Dendritic cell treated with granulocyte-macrophage colony-stimulating factor and Interleukin-4, amounts not matched to agents 40 ng/mL and 50 ng/mL, for 4 days (primary cell): ENCODE measurements at regions of chr1 and their contacts with region 1.

Region 1: GRCh38 chr1:47231301-47232186 is 481 bp downstream of the TAL1 start:
- H3K4me3 Mint-ChIP-seq: peak overlapping the region; percentile 75
- H3K27ac Mint-ChIP-seq: peak overlapping the region; percentile 87
- H3K4me1 Mint-ChIP-seq: peaks cover 52% of the 10 kb centered on the region
- H3K27me3 Mint-ChIP-seq: peaks cover 97% of the 10 kb centered on the region

Region 2: GRCh38 chr1:47067097-47067594 is 164.4 kb before region 1 on chr1 and contains the start of gene CYP4Z1:
- intact Hi-C with region 1: no loop called
- H3K4me3 Mint-ChIP-seq: no peak within 1 kb of the TSS
- H3K27ac Mint-ChIP-seq: no peak within 1 kb of the TSS
- H3K4me1 Mint-ChIP-seq: no peaks in the 10 kb centered on the region
- H3K27me3 Mint-ChIP-seq: peaks cover 16% of the 10 kb centered on the region

Region 3: GRCh38 chr1:47113178-47113577 is 118.4 kb before region 1 on chr1:
- intact Hi-C with region 1: no loop called
- H3K4me3 Mint-ChIP-seq: no peak overlapping the region
- H3K27ac Mint-ChIP-seq: no peak overlapping the region
- H3K4me1 Mint-ChIP-seq: no peaks in the 10 kb centered on the region
- H3K27me3 Mint-ChIP-seq: no peaks in the 10 kb centered on the region

Region 4: GRCh38 chr1:47147047-47147785 is 84.3 kb before region 1 on chr1:
- intact Hi-C with region 1: no loop called
- H3K4me3 Mint-ChIP-seq: no peak overlapping the region
- H3K27ac Mint-ChIP-seq: no peak overlapping the region
- H3K4me1 Mint-ChIP-seq: no peaks in the 10 kb centered on the region
- H3K27me3 Mint-ChIP-seq: peaks cover 3% of the 10 kb centered on the region

Region 5: GRCh38 chr1:47192458-47193384 is 38.8 kb before region 1 on chr1:
- intact Hi-C with region 1: loop called (anchors 5 kb)
- H3K4me3 Mint-ChIP-seq: no peak overlapping the region
- H3K27ac Mint-ChIP-seq: no peak overlapping the region
- H3K4me1 Mint-ChIP-seq: peaks cover 17% of the 10 kb centered on the region
- H3K27me3 Mint-ChIP-seq: peaks cover 14% of the 10 kb centered on the region